Mammary epithelial cell (primary cell): ENCODE measurements at regions of chr20 and their contacts with region 1.

Region 1: DNA sequence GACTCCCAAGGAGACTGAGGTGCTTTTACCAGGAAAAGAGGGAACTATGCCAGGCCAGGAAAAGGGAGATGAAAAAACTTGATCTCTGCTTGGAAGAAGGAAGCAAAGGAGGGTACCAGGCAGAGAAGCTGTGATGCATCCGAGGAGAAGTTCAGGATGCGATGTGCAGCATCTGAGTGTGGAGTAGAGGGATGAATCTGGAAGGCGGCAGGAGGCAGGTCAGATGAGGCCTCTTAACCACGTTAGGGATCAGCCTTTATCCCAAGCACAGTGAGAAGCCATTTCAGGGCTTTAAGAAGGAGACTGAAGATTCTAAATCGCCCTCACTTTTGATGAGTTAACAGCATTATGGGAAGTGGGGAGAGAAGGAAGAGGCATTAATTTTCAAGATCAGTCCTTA is 44.9 kb upstream of the EYA2 start:
- DNase-seq: no peak
- H3K4me3 ChIP-seq: no peak overlapping the region
- H3K27ac ChIP-seq: no peak overlapping the region
- H3K4me1 ChIP-seq: no peaks in the 10 kb centered on the region
- H3K27me3 ChIP-seq: no peaks in the 10 kb centered on the region
- CTCF ChIP-seq: no peak

Region 2: DNA sequence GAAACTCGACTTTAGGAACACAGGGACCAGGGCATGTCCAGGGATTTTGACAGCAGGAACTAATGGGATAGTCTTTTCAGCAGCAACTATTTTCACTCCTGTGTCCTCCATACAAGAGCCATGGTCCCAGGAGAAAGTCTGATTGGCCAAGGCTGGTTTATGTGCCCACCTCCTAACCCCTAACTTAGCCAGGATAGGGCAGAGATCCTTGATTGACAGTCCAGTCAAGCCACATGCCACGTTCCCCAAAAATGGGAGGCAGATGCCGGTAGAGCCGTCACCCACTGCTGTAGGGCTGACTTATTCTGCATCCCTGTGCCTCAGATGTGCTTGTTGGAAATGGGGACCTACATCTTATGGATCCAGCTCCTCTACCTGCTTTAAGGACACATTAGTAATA is 118.0 kb before region 1 on chr20:
- CTCF ChIA-PET with region 1: no interaction called
- dilution Hi-C with region 1: no loop called
- in situ Hi-C with region 1: no loop called
- intact Hi-C with region 1: no loop called
- DNase-seq: no peak
- H3K4me3 ChIP-seq: no peak overlapping the region
- H3K27ac ChIP-seq: no peak overlapping the region
- H3K4me1 ChIP-seq: no peaks in the 10 kb centered on the region
- H3K27me3 ChIP-seq: no peaks in the 10 kb centered on the region
- CTCF ChIP-seq: no peak

Region 3: GRCh38 chr20:46784436-46785127 is 65.2 kb before region 1 on chr20:
- CTCF ChIA-PET with region 1: no interaction called
- dilution Hi-C with region 1: loop called (anchors 5 kb)
- in situ Hi-C with region 1: no loop called
- intact Hi-C with region 1: no loop called
- DNase-seq: no peak
- H3K4me3 ChIP-seq: no peak overlapping the region
- H3K27ac ChIP-seq: no peak overlapping the region
- H3K4me1 ChIP-seq: no peaks in the 10 kb centered on the region
- H3K27me3 ChIP-seq: no peaks in the 10 kb centered on the region
- CTCF ChIP-seq: no peak

Region 4: DNA sequence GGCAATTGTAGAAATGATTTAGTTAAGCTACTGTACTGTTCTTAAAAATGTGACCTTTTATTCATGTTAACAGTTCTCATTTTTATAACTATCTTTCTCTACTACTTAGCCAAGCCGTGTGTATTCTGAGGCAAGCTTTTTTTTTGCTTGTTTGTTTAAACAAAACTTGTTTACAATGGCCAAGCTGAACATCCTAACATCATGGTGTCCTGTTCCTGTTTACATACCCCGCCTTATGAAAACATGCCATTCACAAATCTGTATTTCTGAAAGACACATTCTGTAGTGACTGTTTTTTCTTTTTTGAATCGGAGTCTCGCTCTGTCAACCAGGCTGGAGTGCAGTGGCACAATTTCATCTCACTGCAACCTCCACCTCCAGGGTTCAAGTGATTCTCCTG is 792.9 kb after region 1 on chr20:
- CTCF ChIA-PET with region 1: no interaction called
- dilution Hi-C with region 1: no loop called
- in situ Hi-C with region 1: no loop called
- intact Hi-C with region 1: no loop called
- DNase-seq: no peak
- H3K4me3 ChIP-seq: no peak overlapping the region
- H3K27ac ChIP-seq: no peak overlapping the region
- H3K4me1 ChIP-seq: no peaks in the 10 kb centered on the region
- H3K27me3 ChIP-seq: no peaks in the 10 kb centered on the region
- CTCF ChIP-seq: no peak